ENCODE measurements at regions of chr4 and their contacts with region 1.

Region 1: GRCh38 chr4:52983563-52984303 is 121.6 kb downstream of the RASL11B start:
- DNase-seq: no peak

Region 2: DNA sequence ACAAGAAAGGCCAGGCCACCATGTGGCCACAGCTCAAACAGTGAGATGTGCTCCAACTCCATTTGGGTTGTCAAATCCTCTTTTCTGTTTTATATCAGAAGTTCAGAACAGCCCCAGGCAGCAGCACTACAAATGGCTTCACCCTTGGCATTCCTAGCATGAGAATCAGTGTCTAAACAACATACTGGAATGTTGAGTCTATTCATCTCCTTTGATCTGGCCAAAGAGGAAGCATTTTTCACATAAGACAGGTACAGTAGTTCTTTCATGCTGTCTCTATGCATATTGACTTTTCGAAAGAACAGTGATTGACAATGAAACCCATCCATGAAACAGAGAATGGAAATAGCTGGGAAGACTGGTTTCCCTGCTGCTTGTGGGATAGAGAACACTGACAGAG is 614.1 kb before region 1 on chr4:
- intact Hi-C with region 1: loop called (anchors 2 to 10 kb)
- DNase-seq: no peak

Region 3: DNA sequence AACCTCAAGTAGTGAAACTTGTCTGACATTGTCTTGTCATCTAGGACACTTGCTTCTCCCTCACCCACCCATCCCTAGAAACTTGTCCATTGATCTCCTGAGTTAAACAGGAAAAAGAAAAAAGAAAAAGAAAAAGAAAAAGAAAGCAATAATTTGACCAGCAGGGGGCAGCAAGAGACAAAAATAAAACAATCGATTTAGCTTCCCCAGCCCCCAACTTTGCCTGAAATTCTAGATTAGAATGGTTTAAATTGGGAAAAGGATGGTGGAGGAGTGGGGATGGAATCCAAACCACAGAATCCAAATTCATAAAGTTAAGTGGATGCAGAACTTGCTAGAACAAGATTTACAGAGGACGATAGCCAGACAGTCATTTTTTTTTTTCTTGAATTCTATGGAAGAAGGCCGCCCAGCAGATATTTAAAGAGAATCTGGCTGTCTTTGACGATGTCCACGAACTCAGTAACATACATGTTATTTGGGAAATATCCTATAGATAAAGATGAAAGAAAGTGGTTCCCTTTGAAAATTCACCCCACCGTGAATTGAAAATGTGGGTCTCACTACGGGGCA is 607.5 kb before region 1 on chr4:
- intact Hi-C with region 1: loop called (anchors 2 to 10 kb)
- DNase-seq: no peak

Region 4: GRCh38 chr4:52477191-52477780 is 506.4 kb before region 1 on chr4:
- intact Hi-C with region 1: no loop called
- DNase-seq: no peak

Region 5: GRCh38 chr4:52545099-52546069 is 438.3 kb before region 1 on chr4:
- intact Hi-C with region 1: loop called in 1 of 2 experiments (anchors 5 kb)
- DNase-seq: peak; percentile 90

Region 6: GRCh38 chr4:53039741-53040458 is 56.2 kb after region 1 on chr4:
- intact Hi-C with region 1: no loop called
- DNase-seq: no peak